ENCODE measurements at regions of chr13 and their contacts with region 1.

Region 1: DNA sequence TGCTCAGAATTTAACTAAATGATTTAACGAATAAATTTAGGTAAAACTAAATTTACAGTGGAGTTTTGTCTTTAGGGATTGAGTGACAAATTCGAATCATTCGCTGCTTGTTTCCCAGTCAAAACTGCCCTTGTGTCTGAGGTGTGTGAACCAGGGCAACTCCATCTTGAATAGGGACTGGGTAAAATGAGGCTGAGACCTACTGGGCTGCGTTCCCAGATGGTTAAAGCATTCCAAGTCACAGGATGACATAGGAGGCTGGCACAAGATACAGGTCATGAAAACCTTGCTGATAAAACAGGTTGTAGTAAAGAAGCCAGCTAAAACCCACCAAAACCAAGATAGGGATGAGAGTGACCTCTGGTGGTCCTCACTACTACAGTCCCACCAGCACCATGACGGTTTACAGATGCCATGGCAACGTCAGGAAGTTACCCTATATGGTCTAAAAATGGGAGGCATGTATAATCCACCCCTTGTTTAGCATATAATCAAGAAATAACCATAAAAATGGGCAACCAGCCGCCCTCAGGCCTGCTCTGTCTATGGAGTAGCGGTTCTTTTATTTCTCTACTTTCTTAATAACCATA is 10.2 kb upstream of the ANKRD10 start:
- DNase-seq: peak in 1 of 2 donors; percentile 59
- H3K4me3 ChIP-seq: no peak overlapping the region
- H3K27ac ChIP-seq: no peak overlapping the region
- H3K4me1 ChIP-seq: no peaks in the 10 kb centered on the region
- H3K27me3 ChIP-seq: peaks cover 0 to 38% (median 12%) of the 10 kb centered on the region in 3 donors
- CTCF ChIP-seq: no peak
- EP300 ChIP-seq: no peak
- POLR2A ChIP-seq: no peak

Region 2: DNA sequence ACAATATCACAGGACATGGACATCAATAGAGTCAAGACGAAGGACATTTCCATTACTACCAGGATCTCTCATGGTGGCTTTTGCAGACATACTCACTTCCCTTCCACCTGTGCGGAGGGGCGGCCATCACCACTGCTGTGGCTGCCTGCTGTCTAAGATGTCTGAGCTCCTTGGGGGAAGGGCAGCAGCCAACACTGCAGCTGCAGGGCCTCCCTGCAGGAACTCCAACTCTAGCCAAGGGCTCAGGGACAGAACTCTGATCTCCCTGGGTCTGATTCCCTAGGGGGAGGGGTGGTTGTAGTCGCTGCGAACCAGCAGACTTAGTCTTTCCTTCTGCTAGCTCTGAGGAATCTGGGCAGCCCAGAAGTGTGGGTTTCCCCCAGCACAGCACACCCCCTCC is 68.7 kb after region 1 on chr13:
- intact Hi-C with region 1: loop called (anchors 10 kb)
- DNase-seq: no peak
- H3K4me3 ChIP-seq: no peak overlapping the region
- H3K27ac ChIP-seq: no peak overlapping the region
- H3K4me1 ChIP-seq: no peaks in the 10 kb centered on the region
- H3K27me3 ChIP-seq: peaks cover 0 to 21% (median 3%) of the 10 kb centered on the region in 3 donors
- CTCF ChIP-seq: no peak
- EP300 ChIP-seq: no peak
- POLR2A ChIP-seq: no peak

Region 3: DNA sequence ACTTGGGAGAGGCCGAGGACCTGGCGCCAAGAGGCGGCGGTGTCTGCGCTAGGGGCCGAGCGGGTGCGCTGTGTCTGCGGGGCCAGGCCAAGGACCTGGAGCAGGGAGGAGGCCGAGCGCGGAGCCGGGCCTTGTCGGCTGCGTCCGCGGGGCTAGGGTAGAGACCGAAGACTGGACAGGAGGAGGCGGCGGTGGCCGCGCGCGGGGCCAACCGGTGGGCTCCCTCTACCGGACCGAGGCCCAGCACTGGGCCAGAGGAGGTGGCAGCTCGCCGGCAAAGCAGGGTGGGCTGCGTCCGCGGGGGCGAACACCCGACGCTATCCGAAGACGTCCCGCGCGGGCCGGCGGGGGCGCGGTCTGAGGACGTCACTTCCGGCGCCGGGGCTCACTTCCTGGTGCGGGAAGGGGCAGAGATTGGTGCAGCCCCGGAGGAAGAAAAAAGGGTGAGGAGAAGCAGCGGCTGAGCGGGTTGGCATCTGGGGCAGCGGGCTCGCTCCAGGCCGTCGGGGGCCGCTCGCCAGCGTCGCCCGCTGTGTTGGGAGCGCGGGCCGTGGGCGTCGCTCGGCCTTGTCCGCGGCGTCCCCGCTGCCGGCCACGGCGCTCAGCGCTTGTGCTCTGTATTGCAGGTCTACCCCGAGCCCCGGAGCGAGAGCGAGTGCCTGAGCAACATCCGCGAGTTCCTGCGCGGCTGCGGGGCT is 228.3 kb after region 1 on chr13:
- intact Hi-C with region 1: no loop called
- DNase-seq: peak; percentile 92 to 98
- H3K4me3 ChIP-seq: peak overlapping the region; percentile 84 to 97 (median 87)
- H3K27ac ChIP-seq: peak overlapping the region; percentile 97 to 99 (median 98)
- H3K4me1 ChIP-seq: peaks cover 15 to 52% (median 44%) of the 10 kb centered on the region in 4 donors
- H3K27me3 ChIP-seq: no peaks in the 10 kb centered on the region
- CTCF ChIP-seq: peak in 1 of 7 experiments; percentile 19
- EP300 ChIP-seq: no peak
- POLR2A ChIP-seq: peak in 2 of 4 donors; percentile 44 to 75

Measured in stomach (tissue), 19 donors.